Activated B cell treated with CpG ODN at 0.5 μM for 24 hours (primary cell): ENCODE measurements at regions of chr2 and their contacts with region 1.

Region 1: GRCh38 chr2:223837287-223838061 is at the start of gene AP1S3:
- DNase-seq: peak; percentile 76
- ATAC-seq: peak; percentile 75
- H3K4me3 Mint-ChIP-seq: peak within 1 kb of the TSS; percentile 99
- H3K27ac Mint-ChIP-seq: peak within 1 kb of the TSS; percentile 96
- H3K4me1 Mint-ChIP-seq: peaks cover 64% of the 10 kb centered on the region
- H3K27me3 Mint-ChIP-seq: no peaks in the 10 kb centered on the region
- CTCF ChIP-seq: no peak
- total RNA-seq, gene AP1S3: 46.0 and 46.3 TPM in 2 replicates

Region 2: DNA sequence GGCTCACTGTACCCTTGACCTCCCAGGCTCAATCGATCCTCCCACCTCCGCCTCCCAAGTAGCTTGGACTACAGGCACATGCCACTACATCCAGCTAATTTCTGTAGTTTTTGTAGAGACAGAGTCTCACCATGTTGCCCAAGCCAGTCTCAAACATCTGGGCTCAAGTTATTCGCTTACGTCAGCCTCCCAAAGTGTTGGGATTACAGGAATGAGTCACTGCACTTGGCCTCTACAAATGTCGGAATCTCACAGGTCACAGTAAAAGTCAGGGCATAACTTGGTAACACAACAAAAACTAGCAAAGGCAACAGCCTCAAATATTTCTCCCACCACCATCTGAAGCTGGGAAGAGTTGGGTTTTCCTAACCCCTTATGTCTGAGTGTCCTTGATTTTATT is 260.6 kb before region 1 on chr2:
- CTCF ChIA-PET with region 1: no interaction called
- POLR2A ChIA-PET with region 1: no interaction called
- intact Hi-C with region 1: no loop called
- DNase-seq: no peak
- ATAC-seq: no peak
- H3K4me3 Mint-ChIP-seq: no peak overlapping the region
- H3K27ac Mint-ChIP-seq: no peak overlapping the region
- H3K4me1 Mint-ChIP-seq: no peaks in the 10 kb centered on the region
- H3K27me3 Mint-ChIP-seq: peaks cover 3% of the 10 kb centered on the region
- CTCF ChIP-seq: no peak

Region 3: GRCh38 chr2:223727562-223727961 is 109.9 kb before region 1 on chr2:
- CTCF ChIA-PET with region 1: no interaction called
- POLR2A ChIA-PET with region 1: no interaction called
- intact Hi-C with region 1: loop called (anchors 1 kb)
- DNase-seq: no peak
- ATAC-seq: peak; percentile 65
- H3K4me3 Mint-ChIP-seq: no peak overlapping the region
- H3K27ac Mint-ChIP-seq: no peak overlapping the region
- H3K4me1 Mint-ChIP-seq: no peaks in the 10 kb centered on the region
- H3K27me3 Mint-ChIP-seq: no peaks in the 10 kb centered on the region
- CTCF ChIP-seq: peak; percentile 20

Region 4: DNA sequence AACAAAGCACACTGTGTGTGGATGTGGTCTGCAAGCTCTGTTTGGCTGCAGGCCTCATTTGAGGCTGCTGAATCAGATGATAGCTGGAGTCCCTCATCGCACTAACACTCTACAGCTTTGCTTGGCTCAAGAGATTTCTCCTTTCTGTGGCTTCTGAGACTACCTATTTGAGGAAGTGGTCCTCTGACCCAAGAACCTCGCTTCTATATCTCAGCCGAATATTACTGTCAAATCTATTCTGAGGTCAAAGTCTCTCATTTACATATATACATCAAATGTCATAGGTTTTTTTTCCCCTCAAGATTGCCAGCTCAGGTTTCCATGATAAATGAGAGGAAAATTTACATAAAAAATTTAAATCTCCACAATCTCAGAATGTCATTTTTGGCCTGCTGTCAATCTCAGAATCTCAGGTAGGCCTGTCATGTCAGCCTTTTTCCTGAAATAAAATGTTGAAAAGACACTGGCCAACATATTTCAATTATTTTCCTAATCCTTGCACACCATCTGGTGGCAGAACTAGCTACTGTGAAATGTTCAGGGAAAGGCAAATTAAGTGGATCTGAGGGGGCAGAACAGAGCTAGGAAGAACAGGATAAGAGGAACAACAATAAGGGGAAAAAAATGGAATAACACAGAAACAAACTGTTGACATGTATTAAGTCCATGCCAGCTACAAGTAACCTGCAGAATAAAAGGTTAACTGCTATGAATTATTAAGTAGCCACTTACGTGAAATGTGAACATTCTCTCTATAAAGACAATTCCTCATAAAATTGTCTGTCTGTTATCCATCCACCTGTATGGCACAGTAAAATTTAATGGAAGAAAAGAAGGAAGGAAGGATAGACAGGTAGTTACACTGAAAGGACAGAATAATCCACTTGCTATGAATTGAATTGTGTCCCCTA is 39.4 kb before region 1 on chr2:
- CTCF ChIA-PET with region 1: interaction called, 3 read pairs
- POLR2A ChIA-PET with region 1: interaction called, 10 read pairs
- intact Hi-C with region 1: loop called (anchors 1 kb)
- DNase-seq: no peak
- ATAC-seq: peak; percentile 88
- H3K4me3 Mint-ChIP-seq: peak overlapping the region; percentile 21
- H3K27ac Mint-ChIP-seq: peak overlapping the region; percentile 24
- H3K4me1 Mint-ChIP-seq: peaks cover 57% of the 10 kb centered on the region
- H3K27me3 Mint-ChIP-seq: no peaks in the 10 kb centered on the region
- CTCF ChIP-seq: no peak

Region 5: DNA sequence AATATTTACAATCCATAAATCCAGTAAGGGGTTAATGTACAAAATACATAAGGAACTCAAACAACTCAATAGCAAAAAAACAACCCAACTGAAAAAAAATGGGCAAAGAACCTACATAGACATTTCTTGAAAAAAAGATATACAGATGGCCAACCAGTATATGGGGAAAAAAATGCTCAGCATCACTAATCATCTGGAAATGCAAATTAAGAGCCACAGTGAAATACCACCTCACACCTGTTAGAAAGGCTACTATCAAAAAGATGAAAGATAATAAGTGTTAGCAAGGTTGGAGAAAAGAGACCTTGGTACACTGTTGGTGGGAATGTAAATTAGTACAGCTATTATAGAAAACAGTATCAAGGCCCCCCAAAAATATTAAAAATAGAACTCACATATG is 14.7 kb before region 1 on chr2:
- CTCF ChIA-PET with region 1: no interaction called
- POLR2A ChIA-PET with region 1: interaction called, 12 read pairs
- intact Hi-C with region 1: loop called (anchors 1 kb)
- DNase-seq: no peak
- ATAC-seq: peak; percentile 74
- H3K4me3 Mint-ChIP-seq: peak overlapping the region; percentile 63
- H3K27ac Mint-ChIP-seq: peak overlapping the region; percentile 26
- H3K4me1 Mint-ChIP-seq: peaks cover 71% of the 10 kb centered on the region
- H3K27me3 Mint-ChIP-seq: no peaks in the 10 kb centered on the region
- CTCF ChIP-seq: no peak

Region 6: GRCh38 chr2:223884399-223884798 is 46.9 kb after region 1 on chr2:
- CTCF ChIA-PET with region 1: no interaction called
- POLR2A ChIA-PET with region 1: interaction called, 5 read pairs
- intact Hi-C with region 1: loop called (anchors 2 kb)
- DNase-seq: no peak
- ATAC-seq: peak; percentile 78
- H3K4me3 Mint-ChIP-seq: peak overlapping the region; percentile 3
- H3K27ac Mint-ChIP-seq: peak overlapping the region; percentile 79
- H3K4me1 Mint-ChIP-seq: peaks cover 42% of the 10 kb centered on the region
- H3K27me3 Mint-ChIP-seq: no peaks in the 10 kb centered on the region
- CTCF ChIP-seq: no peak

Region 7: GRCh38 chr2:223944703-223945531 is 107.4 kb after region 1 on chr2 and contains the start of gene WDFY1:
- CTCF ChIA-PET with region 1: no interaction called
- POLR2A ChIA-PET with region 1: interaction called, 18 read pairs
- intact Hi-C with region 1: loop called (anchors 1 kb)
- DNase-seq: peak; percentile 80
- ATAC-seq: peak; percentile 94
- H3K4me3 Mint-ChIP-seq: peak within 1 kb of the TSS; percentile 95
- H3K27ac Mint-ChIP-seq: peak within 1 kb of the TSS; percentile 88
- H3K4me1 Mint-ChIP-seq: peaks cover 58% of the 10 kb centered on the region
- H3K27me3 Mint-ChIP-seq: no peaks in the 10 kb centered on the region
- CTCF ChIP-seq: no peak
- total RNA-seq, gene WDFY1: 67.2 and 77.0 TPM in 2 replicates

Region 8: GRCh38 chr2:224585205-224586088 is 748.0 kb after region 1 on chr2 and contains the start of gene CUL3:
- CTCF ChIA-PET with region 1: no interaction called
- POLR2A ChIA-PET with region 1: interaction called, 3 read pairs
- intact Hi-C with region 1: loop called (anchors 2 kb)
- DNase-seq: peak; percentile 99
- ATAC-seq: peak; percentile 89
- H3K4me3 Mint-ChIP-seq: peak within 1 kb of the TSS; percentile 96
- H3K27ac Mint-ChIP-seq: peak within 1 kb of the TSS; percentile 93
- H3K4me1 Mint-ChIP-seq: peaks cover 47% of the 10 kb centered on the region
- H3K27me3 Mint-ChIP-seq: no peaks in the 10 kb centered on the region
- CTCF ChIP-seq: no peak
- total RNA-seq, gene CUL3: 99.4 and 114 TPM in 2 replicates